GM10248 (cell line): ENCODE measurements at regions of chr20 and their contacts with region 1.

Region 1: GRCh38 chr20:17682103-17682888 is at the start of gene RRBP1:
- DNase-seq: peak; percentile 99
- CTCF ChIP-seq: peak; percentile 65

Region 2: GRCh38 chr20:17648791-17649730 is 33.2 kb before region 1 on chr20:
- CTCF ChIA-PET with region 1: interaction called, 16 read pairs
- POLR2A ChIA-PET with region 1: interaction called, 7 read pairs
- DNase-seq: peak; percentile 65
- CTCF ChIP-seq: peak; percentile 42

Region 3: GRCh38 chr20:17666481-17666880 is 15.8 kb before region 1 on chr20:
- CTCF ChIA-PET with region 1: interaction called, 57 read pairs
- POLR2A ChIA-PET with region 1: no interaction called
- DNase-seq: no peak
- CTCF ChIP-seq: no peak

Region 4: GRCh38 chr20:17699931-17700657 is 17.8 kb after region 1 on chr20 and contains the start of gene BANF2:
- CTCF ChIA-PET with region 1: interaction called, 22 read pairs
- POLR2A ChIA-PET with region 1: no interaction called
- DNase-seq: no peak
- CTCF ChIP-seq: no peak

Region 5: GRCh38 chr20:17854307-17854903 is 172.1 kb after region 1 on chr20:
- CTCF ChIA-PET with region 1: interaction called, 16 read pairs
- POLR2A ChIA-PET with region 1: interaction called, 4 read pairs
- DNase-seq: no peak
- CTCF ChIP-seq: no peak

Region 6: DNA sequence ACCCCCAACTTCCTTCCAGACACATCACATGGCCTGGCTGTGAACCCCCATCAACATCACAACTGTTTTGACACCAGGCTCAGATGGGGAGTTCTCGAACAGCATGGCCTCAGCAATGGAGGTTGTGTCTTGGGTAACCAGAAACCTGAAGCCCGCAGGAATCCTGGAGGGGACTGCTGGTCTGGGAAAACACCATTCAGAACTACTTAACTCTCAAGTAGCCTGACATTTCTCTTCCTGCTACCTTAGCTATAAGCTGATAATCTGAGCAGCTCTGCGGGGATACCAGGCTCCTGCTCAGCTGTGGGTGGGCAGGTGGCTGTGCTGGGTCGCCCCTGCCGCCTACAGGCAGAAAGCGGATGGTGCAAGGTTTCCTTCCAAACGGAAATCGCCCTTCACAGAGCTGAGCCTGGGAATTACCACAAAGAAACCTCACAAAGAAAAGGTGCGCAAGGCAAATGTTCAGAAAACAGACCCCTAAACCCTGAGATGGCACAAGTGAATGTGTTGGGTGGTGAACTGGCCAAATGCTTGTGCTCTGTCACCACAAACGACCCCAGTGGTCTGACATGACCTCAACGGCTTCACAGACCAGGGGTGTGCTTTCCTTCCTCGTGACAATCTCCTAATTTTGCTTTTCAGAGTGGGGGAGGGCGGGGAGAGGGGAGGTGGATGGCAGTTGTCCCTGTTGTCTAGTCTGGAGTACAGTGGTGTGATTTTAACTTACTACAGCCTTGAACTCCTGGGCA is 256.7 kb after region 1 on chr20:
- CTCF ChIA-PET with region 1: interaction called, 53 read pairs
- POLR2A ChIA-PET with region 1: interaction called, 4 read pairs
- DNase-seq: peak; percentile 78
- CTCF ChIP-seq: peak; percentile 92

Region 7: DNA sequence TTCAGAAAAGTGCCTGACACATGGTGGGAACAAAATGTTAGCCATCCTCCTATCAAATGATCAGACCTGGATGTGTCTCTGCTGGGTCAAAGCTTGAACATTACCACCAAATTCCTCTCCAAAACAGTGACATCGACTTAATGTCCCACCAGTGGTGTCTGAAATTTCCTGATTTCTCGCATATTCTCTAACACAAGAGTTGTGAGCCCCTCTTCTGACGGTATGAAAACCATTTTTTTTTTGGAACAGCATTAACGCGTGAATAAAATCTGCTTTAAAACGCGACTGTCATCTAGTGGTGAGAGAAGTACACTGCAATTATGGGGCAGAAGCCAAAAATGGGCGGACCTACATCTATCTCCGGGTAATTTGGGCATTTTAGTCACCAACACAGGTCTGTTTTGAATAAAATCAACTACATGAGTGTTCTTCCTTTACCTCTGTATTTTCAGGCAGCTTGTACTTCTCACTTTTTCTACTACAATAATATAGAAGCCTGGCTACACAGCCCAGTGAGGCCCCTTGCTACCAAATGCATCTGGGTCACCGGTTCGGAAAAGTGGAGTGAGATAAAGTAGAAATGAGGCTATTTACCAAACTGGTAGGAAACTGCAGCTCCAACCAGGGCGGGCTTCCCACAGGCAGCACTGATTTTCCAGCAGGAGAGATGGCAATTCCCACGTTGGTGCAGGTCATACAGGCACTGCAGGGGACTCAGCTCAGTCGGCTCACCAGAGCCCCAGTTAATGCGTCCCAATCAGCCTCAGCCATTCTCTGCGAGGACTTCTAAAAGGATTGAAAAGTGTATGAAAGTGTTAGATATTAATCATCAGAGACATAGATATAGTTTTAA is 313.9 kb after region 1 on chr20:
- CTCF ChIA-PET with region 1: interaction called, 13 read pairs
- POLR2A ChIA-PET with region 1: interaction called, 4 read pairs
- DNase-seq: peak; percentile 58
- CTCF ChIP-seq: peak; percentile 91